K562 (cell line): ENCODE measurements at regions of chr4 and their contacts with region 1.

Region 1: GRCh38 chr4:151644622-151645021 is 116.2 kb downstream of the GATB start:
- DNase-seq: peak; percentile 27 to 53 (median 35)
- ATAC-seq: peak; percentile 86
- H3K4me3 ChIP-seq: no peak overlapping the region
- H3K27ac ChIP-seq: no peak overlapping the region
- H3K4me1 ChIP-seq: no peaks in the 10 kb centered on the region
- H3K27me3 ChIP-seq: peaks cover 6 to 8% of the 10 kb centered on the region in 2 experiments
- CTCF ChIP-seq: peak; percentile 60 to 75 (median 74)
- EP300 ChIP-seq: no peak
- POLR2A ChIP-seq: no peak
- RAD21 ChIP-seq: peak; percentile 7 to 44; a peak in 2 of 4 replicates

Region 2: GRCh38 chr4:151801547-151802516 is 157.2 kb after region 1 on chr4:
- CTCF ChIA-PET with region 1: no interaction called
- POLR2A ChIA-PET with region 1: no interaction called
- in situ Hi-C with region 1: no loop called
- intact Hi-C with region 1: loop called (anchors 10 kb)
- DNase-seq: peak; percentile 51 to 73 (median 71)
- ATAC-seq: peak; percentile 95
- H3K4me3 ChIP-seq: no peak overlapping the region
- H3K27ac ChIP-seq: no peak overlapping the region
- H3K4me1 ChIP-seq: no peaks in the 10 kb centered on the region
- H3K27me3 ChIP-seq: no peaks in the 10 kb centered on the region; a peak in 3 of 5 replicates
- CTCF ChIP-seq: peak; percentile 87 to 98 (median 97)
- EP300 ChIP-seq: no peak
- POLR2A ChIP-seq: no peak
- RAD21 ChIP-seq: peak; percentile 29 to 30; a peak in 3 of 4 replicates

Region 3: DNA sequence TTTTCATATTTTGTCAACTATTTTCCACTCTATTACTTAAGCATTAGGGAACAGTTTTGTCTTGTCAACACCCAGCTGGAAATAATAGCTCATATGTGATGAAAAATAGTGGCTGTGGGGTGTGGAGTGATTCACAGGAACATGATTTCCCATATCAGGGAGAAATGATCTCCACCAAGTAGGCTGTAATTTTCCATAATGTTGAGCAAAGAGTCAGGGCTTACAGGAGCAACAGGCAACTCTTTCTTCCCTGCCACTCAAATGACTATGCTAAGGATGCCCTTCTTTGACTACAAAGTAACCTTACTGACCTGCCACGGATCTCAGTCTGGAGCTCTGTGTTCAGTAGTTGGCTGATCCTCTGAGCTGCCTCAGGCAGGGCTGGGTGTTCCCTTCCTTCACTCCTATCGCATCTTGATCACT is 206.2 kb after region 1 on chr4:
- CTCF ChIA-PET with region 1: no interaction called
- POLR2A ChIA-PET with region 1: no interaction called
- in situ Hi-C with region 1: no loop called
- intact Hi-C with region 1: no loop called
- DNase-seq: no peak
- ATAC-seq: no peak
- H3K4me3 ChIP-seq: no peak overlapping the region
- H3K27ac ChIP-seq: no peak overlapping the region
- H3K4me1 ChIP-seq: no peaks in the 10 kb centered on the region
- H3K27me3 ChIP-seq: no peaks in the 10 kb centered on the region
- CTCF ChIP-seq: no peak
- EP300 ChIP-seq: no peak
- POLR2A ChIP-seq: no peak
- RAD21 ChIP-seq: no peak

Region 4: GRCh38 chr4:151930377-151930776 is 285.8 kb after region 1 on chr4:
- CTCF ChIA-PET with region 1: no interaction called
- POLR2A ChIA-PET with region 1: no interaction called
- in situ Hi-C with region 1: no loop called
- intact Hi-C with region 1: loop called (anchors 10 kb)
- DNase-seq: no peak
- ATAC-seq: no peak
- H3K4me3 ChIP-seq: no peak overlapping the region
- H3K27ac ChIP-seq: no peak overlapping the region
- H3K4me1 ChIP-seq: no peaks in the 10 kb centered on the region
- H3K27me3 ChIP-seq: no peaks in the 10 kb centered on the region
- CTCF ChIP-seq: no peak
- EP300 ChIP-seq: no peak
- POLR2A ChIP-seq: no peak
- RAD21 ChIP-seq: no peak

Region 5: GRCh38 chr4:152398060-152398459 is 753.4 kb after region 1 on chr4:
- CTCF ChIA-PET with region 1: no interaction called
- POLR2A ChIA-PET with region 1: no interaction called
- in situ Hi-C with region 1: no loop called
- intact Hi-C with region 1: loop called (anchors 10 kb)
- DNase-seq: peak in 2 of 4 experiments; percentile 9 to 19
- ATAC-seq: 0 out of 3 replicates have a peak, but pooled peaks have one; percentile 54
- H3K4me3 ChIP-seq: no peak overlapping the region
- H3K27ac ChIP-seq: no peak overlapping the region
- H3K4me1 ChIP-seq: no peaks in the 10 kb centered on the region; a peak in 1 of 5 replicates
- H3K27me3 ChIP-seq: no peaks in the 10 kb centered on the region
- CTCF ChIP-seq: peak in 2 of 3 experiments; percentile 20 to 54; a peak in 3 of 6 replicates
- EP300 ChIP-seq: no peak
- POLR2A ChIP-seq: no peak
- RAD21 ChIP-seq: peak in 1 of 2 experiments; percentile 33; a peak in 3 of 4 replicates